ENCODE measurements at regions of chr19 and their contacts with region 1.

Region 1: DNA sequence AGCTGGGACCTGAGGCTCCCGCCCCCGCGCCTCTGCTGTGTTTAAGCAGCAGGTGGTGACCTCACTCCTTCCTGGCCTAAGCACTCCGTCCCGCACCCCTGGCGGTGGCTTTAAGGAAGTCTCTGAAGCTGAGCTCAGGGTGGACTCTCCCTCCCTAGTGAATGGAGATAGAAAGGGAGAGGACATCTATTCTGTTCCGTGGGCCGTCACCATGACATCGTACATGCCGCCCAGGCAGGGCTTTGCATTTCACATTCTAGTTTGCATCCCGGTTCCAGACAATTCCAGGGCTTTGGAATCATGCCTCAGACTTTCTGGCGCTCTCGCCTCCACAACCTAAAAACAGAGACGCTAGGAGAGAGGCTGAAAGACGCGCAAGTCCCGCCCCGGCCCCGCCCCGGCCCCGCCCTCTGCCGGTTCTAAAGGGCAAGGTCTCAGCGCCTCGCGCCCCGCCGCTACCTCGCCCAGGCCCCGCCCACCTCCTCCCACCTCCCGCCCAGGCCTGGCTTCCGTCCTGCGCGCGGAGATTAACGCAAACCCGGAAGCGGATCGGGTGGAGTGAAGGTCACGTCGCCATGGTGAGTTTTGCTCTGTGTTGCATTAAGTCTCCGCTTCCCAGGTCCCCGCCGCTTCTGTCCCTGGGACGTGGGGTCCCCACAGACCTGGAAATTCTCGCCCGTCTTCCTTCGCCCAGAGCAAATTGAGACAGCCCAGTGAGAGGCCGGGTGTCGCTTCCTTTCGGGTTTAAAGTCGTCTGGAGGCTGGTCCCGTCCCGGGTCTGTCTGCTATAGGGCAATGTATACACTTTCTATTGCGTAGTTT is at the start of gene ZNF808:
- DNase-seq: peak; percentile 97 to 99 (median 98)
- ATAC-seq: peak; percentile 96 to 99 (median 98)
- H3K4me3 ChIP-seq: peak within 1 kb of the TSS; percentile 63 to 94 (median 75)
- H3K27ac ChIP-seq: peak within 1 kb of the TSS; percentile 84 to 97 (median 93)
- H3K4me1 ChIP-seq: peaks cover 0 to 24% (median 9%) of the 10 kb centered on the region in 12 donors
- H3K27me3 ChIP-seq: no peaks in the 10 kb centered on the region
- CTCF ChIP-seq: peak; percentile 43 to 79 (median 60)
- POLR2A ChIP-seq: peak in 1 of 2 donors; percentile 21
- total RNA-seq, gene ZNF808: 16.6 to 46.1 (median 28.9) TPM

Region 2: DNA sequence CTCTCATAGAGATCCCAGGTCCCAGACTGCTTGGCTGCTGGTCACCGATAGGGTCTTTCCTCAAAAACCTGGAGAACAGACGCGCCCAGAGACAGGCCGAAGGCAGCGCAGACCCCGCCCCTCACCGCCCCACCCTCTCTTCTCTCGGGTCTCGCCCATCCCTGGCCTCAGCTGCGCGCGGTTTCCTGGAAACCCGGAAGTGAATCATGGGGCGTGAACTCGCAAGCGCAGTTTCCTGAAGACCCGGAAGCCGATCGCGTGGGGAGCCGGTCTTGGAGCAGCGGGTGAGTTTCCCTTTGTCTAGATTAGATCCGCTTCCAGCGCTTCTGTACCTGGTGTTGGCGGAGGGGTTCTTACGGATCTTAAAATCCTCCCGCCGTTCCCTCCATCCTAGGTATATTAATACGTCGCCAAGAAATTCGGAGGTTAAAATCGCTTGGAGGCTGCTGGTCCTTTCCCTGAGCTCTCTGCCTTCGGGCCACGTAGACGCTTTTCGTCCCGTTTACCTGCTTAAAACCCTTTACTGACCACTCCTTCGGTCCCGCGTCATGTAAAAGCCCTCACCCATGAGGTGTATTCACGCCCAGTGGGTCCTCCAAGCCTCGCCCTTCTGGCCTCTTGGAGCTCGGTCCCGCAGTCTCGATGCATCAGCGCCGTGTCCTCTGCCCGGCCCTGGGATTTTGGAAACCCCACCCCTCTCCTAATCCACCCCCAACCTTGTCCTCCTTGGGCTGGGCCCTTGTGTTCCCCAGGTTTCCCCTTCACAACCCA is 73.8 kb before region 1 on chr19 and contains the start of gene ZNF578:
- intact Hi-C with region 1: loop called in 2 of 10 experiments (anchors 5 kb)
- DNase-seq: peak; percentile 88 to 93 (median 90)
- ATAC-seq: peak; percentile 93 to 99 (median 98)
- H3K4me3 ChIP-seq: peak within 1 kb of the TSS; percentile 51 to 89 (median 76)
- H3K27ac ChIP-seq: peak within 1 kb of the TSS in 7 of 12 donors; percentile 3 to 71 (median 39)
- H3K4me1 ChIP-seq: peaks cover 0 to 9% (median 4%) of the 10 kb centered on the region in 12 donors
- H3K27me3 ChIP-seq: peaks cover 0 to 6% (median 0%) of the 10 kb centered on the region in 9 donors
- CTCF ChIP-seq: peak in 1 of 12 donors; percentile 11
- POLR2A ChIP-seq: no peak
- total RNA-seq, gene ZNF578: 0.64 to 4.7 (median 2.1) TPM

Region 3: DNA sequence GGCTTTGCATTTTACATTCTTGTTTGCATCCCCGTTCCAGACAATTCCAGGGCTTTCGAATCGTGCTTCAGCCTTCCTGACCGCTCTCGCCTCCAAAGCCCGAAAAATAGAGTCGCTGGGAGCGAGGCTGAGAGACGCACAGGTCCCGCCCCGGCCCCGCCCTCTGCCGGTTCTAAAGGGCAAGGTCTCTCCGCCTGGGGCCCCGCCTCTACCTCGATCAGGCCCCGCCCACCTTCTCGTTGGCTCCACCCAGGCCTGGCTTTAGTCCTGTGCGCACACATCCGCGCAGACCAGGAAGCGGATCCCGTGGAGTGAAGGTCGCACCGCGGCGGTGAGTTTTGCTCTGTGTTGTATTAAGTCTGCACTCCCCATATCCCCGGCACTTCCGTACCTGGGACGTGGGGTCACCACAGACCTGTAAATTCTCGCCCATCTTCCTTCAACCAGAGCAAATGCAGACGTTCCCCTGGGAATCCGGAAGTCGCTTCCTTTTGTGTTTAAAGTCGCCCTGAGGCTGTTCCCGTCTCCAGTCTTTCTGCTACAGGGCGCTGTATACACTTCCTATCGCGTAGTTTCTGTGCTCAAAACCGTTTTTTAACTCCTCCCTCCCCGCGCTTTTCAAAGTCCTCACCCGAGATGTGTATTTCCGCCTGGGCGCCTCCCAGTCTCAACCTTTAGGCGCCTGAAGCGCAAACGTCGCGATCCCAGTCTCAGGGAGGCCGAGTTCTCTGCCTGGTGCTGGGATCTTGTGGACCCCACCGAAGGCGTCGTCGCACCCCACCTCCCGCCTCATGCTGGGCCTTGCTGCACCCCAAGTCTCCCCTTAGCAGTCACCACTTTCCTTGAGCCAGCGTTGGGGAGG is 42.9 kb after region 1 on chr19 and contains the start of gene ZNF701:
- intact Hi-C with region 1: loop called in 5 of 10 experiments (anchors 2 to 5 kb)
- DNase-seq: peak; percentile 95 to 98 (median 96)
- ATAC-seq: peak; percentile 100
- H3K4me3 ChIP-seq: peak within 1 kb of the TSS; percentile 51 to 99 (median 74)
- H3K27ac ChIP-seq: peak within 1 kb of the TSS; percentile 65 to 87 (median 82)
- H3K4me1 ChIP-seq: peaks cover 0 to 16% (median 8%) of the 10 kb centered on the region in 12 donors
- H3K27me3 ChIP-seq: no peaks in the 10 kb centered on the region
- CTCF ChIP-seq: peak; percentile 20 to 57 (median 38)
- POLR2A ChIP-seq: peak; percentile 54 to 96
- total RNA-seq, gene ZNF701: 8.3 to 26.6 (median 15.6) TPM

Region 4: DNA sequence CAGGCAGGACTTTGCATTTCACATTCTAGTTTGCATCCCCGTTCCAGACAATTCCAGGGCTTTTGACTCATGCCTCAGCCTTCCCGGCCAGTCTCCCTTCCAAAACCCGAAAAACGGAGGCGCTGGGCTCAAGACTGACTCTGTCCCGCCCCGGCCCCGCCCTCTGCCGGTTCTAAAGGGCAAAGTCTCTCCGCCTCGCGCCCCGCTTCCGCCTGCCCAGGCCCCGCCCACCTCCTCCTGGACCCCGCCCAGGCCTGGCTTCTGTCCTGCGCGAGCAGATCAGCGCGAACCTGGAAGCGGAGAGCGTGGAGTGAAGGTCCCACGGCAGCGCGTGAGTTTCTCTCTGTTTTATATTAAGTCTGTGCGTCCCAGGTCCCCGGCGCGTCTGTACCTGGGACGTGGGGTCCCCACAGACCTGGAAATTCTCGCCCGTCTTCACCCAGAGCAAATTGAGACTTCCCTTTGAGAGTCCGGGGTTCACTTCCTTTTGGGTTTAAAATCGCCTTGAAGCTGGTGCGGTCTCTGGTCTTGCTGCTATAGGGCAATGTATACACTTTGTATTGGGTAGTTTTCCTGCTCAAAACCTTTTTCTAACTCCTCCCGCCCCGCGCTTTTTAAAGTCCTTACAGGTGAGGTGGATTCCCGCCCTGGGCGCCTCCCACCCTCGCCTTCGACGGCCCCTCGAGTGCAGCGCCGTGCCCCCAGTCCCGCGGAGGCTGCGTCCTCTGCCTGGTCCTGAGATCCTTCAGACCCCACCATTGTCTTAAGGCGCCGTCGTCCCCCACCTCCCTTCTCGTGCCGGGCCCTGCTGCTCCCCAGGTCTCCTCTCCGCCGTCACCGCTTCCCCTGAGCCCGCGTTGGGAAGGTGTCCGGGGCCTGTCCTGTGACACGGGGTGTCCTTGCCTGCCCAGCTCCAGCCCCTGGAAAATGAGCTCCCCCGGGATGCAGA is 74.0 kb after region 1 on chr19:
- intact Hi-C with region 1: loop called in 2 of 10 experiments (anchors 2 kb)
- DNase-seq: peak; percentile 94 to 97 (median 95)
- ATAC-seq: peak; percentile 95 to 99 (median 99)
- H3K4me3 ChIP-seq: peak overlapping the region; percentile 43 to 80 (median 68)
- H3K27ac ChIP-seq: peak overlapping the region in 11 of 12 donors; percentile 32 to 74 (median 66)
- H3K4me1 ChIP-seq: peaks cover 0 to 19% (median 12%) of the 10 kb centered on the region in 12 donors
- H3K27me3 ChIP-seq: no peaks in the 10 kb centered on the region
- CTCF ChIP-seq: peak in 11 of 12 donors; percentile 24 to 65 (median 46)
- POLR2A ChIP-seq: peak in 1 of 2 donors; percentile 25

Region 5: DNA sequence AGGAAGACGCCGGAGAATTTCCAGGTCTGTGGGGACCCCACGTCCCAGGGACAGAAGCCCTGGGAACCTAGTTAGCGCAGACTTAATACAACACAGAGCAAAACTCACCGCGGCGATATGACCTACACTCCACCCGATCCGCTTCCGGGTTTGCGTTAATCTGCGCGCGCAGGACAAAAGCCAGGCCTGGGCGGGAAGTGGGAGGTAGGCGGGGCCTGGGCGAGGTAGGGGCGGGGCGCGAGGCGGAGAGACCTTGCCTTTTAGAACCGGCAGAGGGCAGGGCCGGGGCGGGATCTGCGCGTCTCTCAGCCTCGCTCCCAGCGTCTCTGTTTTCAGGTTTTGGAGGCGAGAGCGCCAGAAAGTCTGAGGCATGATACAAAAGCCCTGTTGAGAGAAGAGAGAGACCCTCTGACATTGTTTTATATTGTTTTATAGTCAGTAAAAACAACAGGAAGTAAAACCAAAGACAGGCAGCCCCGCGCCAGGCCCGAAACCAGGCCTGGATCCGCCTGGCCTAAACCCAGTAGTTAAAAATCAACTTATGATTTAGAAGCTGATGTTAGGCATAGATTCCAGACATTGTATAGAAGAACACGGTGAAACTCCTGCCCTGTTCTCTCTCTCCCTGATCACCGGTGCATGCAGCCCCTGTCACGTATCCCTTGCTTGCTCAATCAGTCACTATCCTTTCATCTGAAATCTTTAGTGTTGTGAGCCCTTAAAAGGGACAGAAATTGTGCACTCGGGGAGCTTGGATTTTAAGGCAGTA is 207.7 kb after region 1 on chr19 and contains the start of gene ZNF611:
- intact Hi-C with region 1: loop called in 2 of 10 experiments (anchors 2 to 5 kb)
- DNase-seq: peak; percentile 98 to 99 (median 98)
- ATAC-seq: peak; percentile 98 to 99 (median 99)
- H3K4me3 ChIP-seq: peak within 1 kb of the TSS; percentile 61 to 95 (median 82)
- H3K27ac ChIP-seq: peak within 1 kb of the TSS; percentile 73 to 96 (median 90)
- H3K4me1 ChIP-seq: peaks cover 0 to 30% (median 11%) of the 10 kb centered on the region in 12 donors
- H3K27me3 ChIP-seq: no peaks in the 10 kb centered on the region
- CTCF ChIP-seq: peak; percentile 43 to 85 (median 66)
- POLR2A ChIP-seq: peak; percentile 33 to 91
- total RNA-seq, gene ZNF611: 3.8 to 12.6 (median 6.9) TPM

Measured in heart left ventricle (tissue), 16 donors.